PC-9 (cell line): ENCODE measurements at regions of chr9 and their contacts with region 1.

Region 1: DNA sequence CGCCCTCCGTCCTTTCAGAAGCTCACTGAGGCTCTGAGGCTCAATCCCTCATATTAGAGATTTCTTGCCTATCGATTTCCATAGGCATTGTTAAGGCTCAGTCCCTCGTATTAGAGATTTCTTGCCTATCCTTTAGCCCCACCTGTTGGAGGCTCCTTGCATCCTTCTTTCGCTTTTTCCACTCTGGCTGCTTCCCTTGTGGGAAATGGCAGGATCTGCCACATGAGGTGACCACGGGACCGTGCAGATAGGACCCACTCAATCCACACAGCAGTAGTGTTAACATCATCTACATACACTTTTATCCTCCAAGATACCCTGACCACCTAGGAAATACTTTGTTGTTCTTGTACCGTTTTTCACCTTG is 19.5 kb downstream of the IFT74 start:
- DNase-seq: peak in 1 of 2 experiments; percentile 10
- H3K4me3 ChIP-seq: no peak overlapping the region
- H3K27ac ChIP-seq: no peak overlapping the region
- H3K4me1 ChIP-seq: no peaks in the 10 kb centered on the region
- H3K27me3 ChIP-seq: no peaks in the 10 kb centered on the region
- CTCF ChIP-seq: peak; percentile 36; the same call in 1 of the 2 replicates

Region 2: DNA sequence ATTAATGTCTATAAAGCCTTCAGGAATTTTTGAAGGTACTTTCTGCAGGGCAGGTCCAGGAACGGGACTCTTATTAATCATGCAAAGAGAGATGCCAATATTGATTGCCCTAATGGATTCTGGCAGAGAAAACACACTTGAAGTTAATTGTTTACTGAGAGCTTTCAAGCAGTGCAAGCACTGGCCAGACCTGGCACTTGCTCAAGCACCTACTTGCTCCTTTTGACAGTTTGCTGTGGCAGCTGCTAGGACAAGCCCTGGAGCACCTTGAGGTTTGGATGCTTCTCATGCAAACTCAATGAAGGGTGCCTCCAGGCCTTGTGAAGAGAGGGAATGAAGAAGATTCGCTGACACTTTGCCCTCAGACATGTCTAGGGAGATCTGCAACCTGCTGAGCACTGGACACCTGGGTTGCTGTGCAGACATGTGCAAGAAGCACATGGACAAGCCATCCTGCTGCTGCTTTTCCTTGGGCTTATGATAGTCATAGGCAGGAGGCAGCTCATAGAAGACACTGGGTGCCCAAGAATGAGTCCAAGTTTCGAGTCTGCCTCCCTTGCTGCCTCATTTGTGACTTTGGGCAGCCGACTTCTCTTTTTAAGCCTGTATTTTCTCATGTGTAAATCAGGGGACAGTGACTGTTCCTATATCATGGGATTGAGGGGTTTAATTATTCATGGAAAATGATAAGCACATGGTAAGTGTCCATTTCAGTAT is 410.1 kb after region 1 on chr9:
- CTCF ChIA-PET with region 1: interaction called, 28 read pairs
- POLR2A ChIA-PET with region 1: no interaction called
- intact Hi-C with region 1: no loop called
- DNase-seq: no peak
- H3K4me3 ChIP-seq: no peak overlapping the region
- H3K27ac ChIP-seq: no peak overlapping the region
- H3K4me1 ChIP-seq: no peaks in the 10 kb centered on the region
- H3K27me3 ChIP-seq: no peaks in the 10 kb centered on the region
- CTCF ChIP-seq: no peak